ENCODE measurements at regions of chr13 and their contacts with region 1.

Region 1: GRCh38 chr13:99269627-99270241 is 11.6 kb upstream of the GPR18 start:
- DNase-seq: no peak
- H3K4me3 ChIP-seq: no peak overlapping the region
- H3K27me3 ChIP-seq: no peaks in the 10 kb centered on the region
- CTCF ChIP-seq: peak; percentile 74

Region 2: DNA sequence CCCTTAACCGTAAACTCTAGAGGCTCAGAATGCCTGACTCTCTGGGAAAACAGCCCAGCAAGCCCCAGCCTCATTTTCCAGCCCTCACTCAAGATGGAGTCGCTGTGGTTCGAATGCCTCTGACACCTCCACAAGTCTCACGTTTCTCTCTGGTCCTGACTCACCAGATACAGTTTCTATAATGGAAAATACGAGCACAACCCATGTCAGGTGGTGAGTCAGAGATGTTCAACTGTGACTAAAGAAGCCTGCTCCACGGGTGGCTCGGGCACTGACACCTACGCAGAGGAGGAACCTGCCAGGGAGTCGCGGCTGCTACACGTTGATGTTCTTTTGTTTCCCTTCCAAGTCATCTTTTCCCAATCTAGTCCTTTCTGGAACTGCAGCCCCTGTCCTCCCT is 605.7 kb before region 1 on chr13:
- CTCF ChIA-PET with region 1: no interaction called
- POLR2A ChIA-PET with region 1: no interaction called
- DNase-seq: peak; percentile 31
- H3K4me3 ChIP-seq: no peak overlapping the region
- H3K27me3 ChIP-seq: peaks cover 3% of the 10 kb centered on the region; the same call in 1 of the 2 replicates
- CTCF ChIP-seq: no peak

Region 3: DNA sequence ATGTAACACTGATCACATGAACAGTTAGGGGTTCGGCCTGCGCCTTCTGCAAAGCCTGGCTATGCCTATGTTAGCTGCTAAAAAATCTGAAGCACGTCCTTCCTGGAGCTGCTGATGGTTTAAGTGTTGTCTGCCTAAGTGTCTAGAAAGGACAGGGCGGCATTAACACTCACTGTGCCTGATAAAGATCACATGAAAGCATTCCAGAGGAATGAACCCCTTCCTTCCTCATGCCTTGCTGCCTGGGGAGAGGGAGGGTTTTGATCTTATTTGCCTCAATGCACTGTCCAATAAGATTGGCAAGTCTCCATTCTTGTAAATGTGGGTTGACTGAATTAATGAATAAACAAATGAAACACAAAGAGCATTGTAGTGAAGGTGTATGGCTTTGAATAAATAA is 297.1 kb before region 1 on chr13:
- CTCF ChIA-PET with region 1: no interaction called
- POLR2A ChIA-PET with region 1: no interaction called
- DNase-seq: no peak
- H3K4me3 ChIP-seq: no peak overlapping the region
- H3K27me3 ChIP-seq: no peaks in the 10 kb centered on the region
- CTCF ChIP-seq: no peak

Region 4: DNA sequence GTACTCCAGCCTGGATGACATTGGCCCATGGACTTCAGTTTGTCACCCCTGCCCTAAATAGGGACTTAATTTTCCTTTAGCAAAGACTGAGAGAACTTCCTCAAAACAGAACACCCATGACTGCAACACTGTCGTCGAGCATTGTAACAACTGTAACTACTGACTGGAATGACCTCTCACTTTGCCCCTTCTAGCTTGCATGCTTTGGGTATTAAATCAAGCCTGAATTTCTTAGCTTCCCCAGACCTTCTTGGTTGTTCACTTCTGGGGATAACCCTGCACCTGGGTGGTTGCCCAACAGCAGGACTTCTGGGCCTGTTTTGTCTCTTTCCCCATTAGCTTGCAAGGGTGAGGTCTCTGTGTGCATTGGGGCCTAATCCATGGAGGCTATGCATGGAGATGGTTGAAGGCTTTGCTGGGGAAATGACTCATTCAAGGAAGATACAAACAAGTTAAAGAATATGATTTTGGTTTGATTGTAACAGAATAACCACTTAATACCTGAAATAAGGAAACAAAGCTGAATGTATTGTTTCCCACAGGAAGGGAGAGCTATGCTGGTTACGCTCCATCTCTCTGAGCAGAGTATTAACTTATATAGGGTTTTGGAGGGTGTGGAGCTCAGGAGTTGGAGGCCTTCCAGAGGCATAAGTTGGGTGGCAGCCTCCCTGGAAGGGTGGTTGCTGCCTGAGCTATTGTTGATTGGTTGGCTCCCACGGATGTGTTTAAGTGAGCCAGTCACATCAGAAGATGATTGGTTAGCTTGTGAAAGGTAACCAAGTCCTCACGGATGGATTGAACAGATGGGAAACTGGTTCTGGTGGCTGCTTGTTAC is 103.8 kb before region 1 on chr13:
- CTCF ChIA-PET with region 1: interaction called, 267 read pairs
- POLR2A ChIA-PET with region 1: no interaction called
- DNase-seq: no peak
- H3K4me3 ChIP-seq: no peak overlapping the region
- H3K27me3 ChIP-seq: peaks cover 4% of the 10 kb centered on the region; the same call in 1 of the 2 replicates
- CTCF ChIP-seq: no peak

Region 5: DNA sequence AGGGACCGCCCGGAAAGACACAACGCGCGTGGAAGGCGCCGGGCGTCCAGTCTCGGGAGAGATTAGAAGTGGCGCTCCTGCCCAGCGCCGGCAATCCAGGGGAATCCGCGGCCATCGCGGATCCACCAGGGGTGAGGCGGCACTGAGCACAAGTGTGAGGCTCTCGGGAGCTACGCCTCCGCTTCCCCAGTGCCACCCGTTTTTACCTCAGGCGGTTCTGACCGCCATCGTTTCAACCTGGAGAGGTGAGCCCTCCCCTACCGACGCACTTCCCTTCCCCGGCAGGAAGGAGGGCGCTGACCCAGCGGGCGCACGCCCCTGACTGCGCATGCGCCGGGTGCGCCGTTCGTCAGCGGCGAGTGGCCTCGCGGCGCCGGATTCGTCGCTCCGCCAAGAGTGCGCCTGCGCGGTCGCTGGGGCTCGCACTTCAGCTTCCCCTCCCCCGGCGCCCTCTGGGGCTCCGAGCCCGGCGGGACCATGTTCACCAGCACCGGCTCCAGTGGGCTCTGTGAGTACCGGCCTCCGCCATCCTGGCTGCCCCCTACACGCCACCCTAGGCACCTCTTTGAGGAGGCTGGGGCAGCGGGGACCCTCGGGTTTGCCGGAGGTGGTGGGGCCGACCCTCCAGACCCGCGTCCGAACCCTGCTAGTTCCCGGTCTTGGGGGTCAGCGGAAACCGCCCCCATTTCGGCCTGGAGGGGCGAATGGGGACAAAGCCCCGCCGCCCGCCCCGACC is 69.1 kb before region 1 on chr13 and contains the start of gene UBAC2:
- CTCF ChIA-PET with region 1: interaction called, 66 read pairs
- POLR2A ChIA-PET with region 1: no interaction called
- DNase-seq: peak; percentile 57
- H3K4me3 ChIP-seq: peak within 1 kb of the TSS; percentile 97
- H3K27me3 ChIP-seq: no peaks in the 10 kb centered on the region
- CTCF ChIP-seq: 0 out of 2 replicates have a peak, but pooled peaks have one; percentile 21
- polyA plus RNA-seq, gene UBAC2: 84.7 and 87.8 TPM in 2 replicates

Region 6: DNA sequence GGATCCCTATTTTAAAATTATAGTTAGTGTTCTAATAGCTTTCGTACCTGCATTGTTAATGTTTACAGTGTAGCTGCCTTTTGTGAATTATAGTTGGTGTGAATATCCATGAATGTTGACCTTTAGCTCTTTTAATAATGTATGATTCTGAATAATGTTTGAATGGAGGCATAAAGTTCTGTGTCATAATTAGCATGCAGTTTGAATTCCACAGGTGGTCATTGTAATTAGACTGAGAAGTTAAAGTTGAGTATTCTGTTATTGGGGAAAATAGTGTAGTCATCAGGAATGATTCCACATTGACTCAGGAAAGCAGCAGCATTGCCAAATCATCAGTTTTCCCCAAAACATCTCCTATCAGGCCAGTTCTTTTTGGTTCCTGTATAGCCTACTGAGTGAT is 23.6 kb before region 1 on chr13:
- CTCF ChIA-PET with region 1: no interaction called
- POLR2A ChIA-PET with region 1: no interaction called
- DNase-seq: no peak
- H3K4me3 ChIP-seq: no peak overlapping the region
- H3K27me3 ChIP-seq: no peaks in the 10 kb centered on the region
- CTCF ChIP-seq: no peak

Region 7: DNA sequence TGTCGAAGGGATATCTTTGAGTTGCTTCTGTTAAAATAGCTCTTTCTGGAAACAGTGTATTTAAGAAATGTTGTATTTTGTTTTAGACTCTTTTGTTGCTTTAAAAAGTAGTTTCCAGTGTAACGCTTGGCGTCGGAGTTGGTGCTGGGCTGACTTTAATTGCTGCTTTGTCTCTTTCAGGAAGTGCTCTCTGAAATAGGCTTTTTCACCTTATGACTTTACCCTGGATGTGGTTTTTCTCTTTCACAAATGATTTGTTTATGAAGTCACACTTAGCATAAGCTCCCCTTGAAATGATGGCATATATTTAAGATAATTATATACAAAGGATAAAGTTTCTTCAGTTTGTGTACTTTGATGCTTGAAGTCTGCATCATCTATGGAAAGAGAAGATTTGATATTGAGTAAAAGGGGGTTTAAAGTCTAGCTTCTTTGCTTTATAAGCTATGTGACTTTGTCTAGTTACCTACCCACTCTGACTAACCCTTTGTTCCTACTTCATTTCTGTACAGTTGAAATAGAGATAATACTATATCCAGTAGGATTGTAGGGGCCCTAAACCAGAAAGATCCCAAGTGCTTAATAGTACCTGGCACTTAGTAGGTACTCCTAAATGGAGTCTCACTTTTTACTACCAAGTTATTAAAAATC is 11.4 kb before region 1 on chr13 and contains the start of gene GPR18:
- CTCF ChIA-PET with region 1: interaction called, 7 read pairs
- POLR2A ChIA-PET with region 1: interaction called, 10 read pairs
- DNase-seq: no peak
- H3K4me3 ChIP-seq: no peak within 1 kb of the TSS
- H3K27me3 ChIP-seq: no peaks in the 10 kb centered on the region
- CTCF ChIP-seq: no peak
- polyA plus RNA-seq, gene GPR18: not detected in 2 replicates

Region 8: DNA sequence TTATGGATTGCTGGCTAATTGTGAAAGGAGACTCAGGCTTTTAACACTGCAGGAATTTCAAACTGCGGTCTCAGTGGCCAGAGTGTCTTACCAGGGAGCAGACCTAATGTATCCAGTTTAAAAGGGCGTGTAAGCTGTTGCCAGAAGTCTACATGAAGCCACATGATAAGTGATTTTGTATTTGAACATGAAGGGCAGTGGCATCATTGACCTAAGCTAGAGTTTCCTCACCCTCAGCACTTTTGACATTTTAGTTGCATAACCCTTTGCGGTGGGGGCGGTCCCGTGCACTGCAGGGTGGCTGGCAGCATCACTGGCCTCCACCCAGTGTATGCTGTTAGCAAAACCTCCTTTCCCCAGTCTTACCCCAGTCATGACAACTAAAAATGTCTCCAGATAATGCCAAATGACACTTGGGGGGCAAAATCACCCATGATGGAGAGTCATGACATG is 12.1 kb after region 1 on chr13:
- CTCF ChIA-PET with region 1: interaction called, 14 read pairs
- POLR2A ChIA-PET with region 1: no interaction called
- DNase-seq: no peak
- H3K4me3 ChIP-seq: no peak overlapping the region
- H3K27me3 ChIP-seq: no peaks in the 10 kb centered on the region
- CTCF ChIP-seq: no peak

Region 9: DNA sequence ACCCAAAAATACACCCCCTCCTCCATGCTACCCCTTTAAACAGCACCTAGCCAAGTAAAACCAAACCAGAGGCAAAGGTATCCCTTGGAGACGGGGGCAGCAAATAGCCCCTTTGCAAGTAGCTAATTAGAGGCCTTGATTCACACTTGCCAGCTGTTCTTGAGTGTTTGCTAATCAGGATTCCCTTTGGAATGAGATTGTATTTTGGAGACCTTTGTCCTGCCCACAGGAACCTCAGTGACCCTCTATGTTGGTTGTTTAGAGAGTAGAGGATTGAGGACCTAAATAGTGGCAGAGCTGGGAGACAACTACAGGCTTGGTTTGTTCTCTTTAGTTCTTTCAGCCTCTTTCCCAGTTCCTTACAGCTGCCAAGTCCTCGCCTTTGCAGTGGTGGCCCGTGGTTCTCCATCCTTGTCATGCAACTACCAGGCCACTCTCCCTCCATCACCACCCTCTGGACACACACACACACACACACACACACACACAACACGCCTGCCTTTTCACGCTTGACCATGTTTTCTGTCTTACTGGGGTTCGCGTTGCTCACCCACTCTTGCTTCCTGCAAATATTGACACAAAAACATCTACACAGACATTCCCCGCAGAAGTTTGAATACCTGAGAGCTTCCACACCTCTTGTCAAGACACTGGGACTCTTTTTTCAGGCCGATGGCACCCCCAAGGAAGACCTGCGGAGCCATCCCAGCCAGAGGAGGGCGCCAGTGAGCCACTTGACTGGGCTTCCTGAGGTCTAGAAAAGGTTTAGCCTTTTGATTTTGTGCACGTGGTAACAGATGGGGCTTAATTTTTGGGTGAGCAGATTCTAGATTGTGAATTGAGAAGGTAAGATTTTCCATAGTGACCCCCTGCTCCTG is 117.4 kb after region 1 on chr13:
- CTCF ChIA-PET with region 1: interaction called, 15 read pairs
- POLR2A ChIA-PET with region 1: no interaction called
- DNase-seq: no peak
- H3K4me3 ChIP-seq: no peak overlapping the region
- H3K27me3 ChIP-seq: no peaks in the 10 kb centered on the region
- CTCF ChIP-seq: peak; percentile 56